ENCODE measurements at regions of chr16 and their contacts with region 1.

Region 1: GRCh38 chr16:47141773-47142485 is 1.8 kb downstream of the NETO2 start:
- DNase-seq: peak; percentile 90

Region 2: GRCh38 chr16:47110939-47111338 is 31.0 kb before region 1 on chr16:
- intact Hi-C with region 1: no loop called
- DNase-seq: no peak

Region 3: DNA sequence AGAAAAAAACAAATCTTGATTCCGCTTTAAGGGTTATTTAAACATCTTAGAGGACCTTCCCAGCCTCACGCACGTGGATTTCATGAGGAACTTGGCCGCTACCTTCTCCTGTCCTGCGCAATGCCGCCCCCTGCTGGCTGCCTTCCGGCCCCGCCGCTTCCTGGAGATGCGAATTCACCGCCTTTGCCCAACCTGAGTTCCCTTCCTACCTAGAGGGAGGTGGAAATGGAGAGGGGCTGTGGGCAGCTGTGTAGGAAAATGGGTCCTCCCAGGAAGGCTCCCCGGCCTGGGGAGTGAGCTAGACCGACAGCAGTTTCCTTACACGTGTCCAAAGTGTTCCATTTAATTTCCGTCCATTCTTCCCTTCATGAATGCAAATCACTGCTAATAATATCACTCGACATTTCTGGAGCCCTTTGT is 1014.9 kb after region 1 on chr16:
- intact Hi-C with region 1: loop called (anchors 10 kb)
- DNase-seq: peak; percentile 95

Measured in posterior vena cava (tissue), 2 donors.